Ovary (tissue), 10 donors: ENCODE measurements at regions of chr18 and their contacts with region 1.

Region 1: DNA sequence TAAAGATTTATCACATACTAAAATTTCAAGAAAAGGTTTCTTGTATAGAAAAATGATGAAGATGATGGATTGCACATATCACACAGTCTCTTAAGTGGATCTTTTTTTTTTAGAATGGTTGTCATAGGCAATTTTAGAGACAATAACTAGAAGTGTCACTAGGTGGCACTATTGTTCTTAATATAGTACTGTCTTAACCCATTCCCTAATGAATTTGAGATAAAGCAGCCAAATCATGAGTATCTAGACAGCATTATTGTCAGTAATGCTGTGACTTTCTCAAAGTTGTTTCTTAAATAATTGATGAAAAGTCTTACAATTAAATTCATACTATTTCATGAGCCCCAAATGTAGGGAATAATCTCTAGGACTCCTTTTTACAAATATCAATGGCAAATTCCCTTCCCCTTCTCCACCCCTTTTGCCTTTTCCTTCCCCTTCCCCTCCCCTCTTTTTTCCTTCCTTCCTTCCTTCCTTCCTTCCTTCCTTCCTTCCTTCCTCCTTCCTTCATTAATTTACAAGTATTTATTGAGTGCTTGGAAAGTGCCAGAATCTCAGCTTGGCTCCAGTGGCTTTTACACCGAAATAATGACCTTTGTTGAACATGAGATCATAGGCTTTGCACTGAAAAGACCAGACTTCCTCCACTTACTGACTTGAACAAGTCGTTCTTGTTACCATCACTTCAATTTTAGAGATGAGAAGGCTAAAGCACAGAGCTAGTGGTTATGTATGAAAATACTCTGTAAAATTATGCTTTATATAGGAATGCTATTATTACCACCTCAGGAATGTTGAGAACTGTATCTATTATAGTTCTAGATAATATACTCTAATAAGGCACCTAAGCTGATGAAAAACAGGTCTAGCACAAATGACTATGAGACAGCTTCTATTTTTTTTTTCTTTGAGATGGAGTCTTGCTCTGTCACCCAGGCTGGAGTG is 19.8 kb downstream of the MYL12B start:
- DNase-seq: no peak
- H3K4me3 ChIP-seq: no peak overlapping the region
- H3K27ac ChIP-seq: no peak overlapping the region
- H3K4me1 ChIP-seq: no peaks in the 10 kb centered on the region
- H3K27me3 ChIP-seq: no peaks in the 10 kb centered on the region
- CTCF ChIP-seq: peak; percentile 19 to 75 (median 57)
- EP300 ChIP-seq: no peak
- POLR2A ChIP-seq: no peak

Region 2: DNA sequence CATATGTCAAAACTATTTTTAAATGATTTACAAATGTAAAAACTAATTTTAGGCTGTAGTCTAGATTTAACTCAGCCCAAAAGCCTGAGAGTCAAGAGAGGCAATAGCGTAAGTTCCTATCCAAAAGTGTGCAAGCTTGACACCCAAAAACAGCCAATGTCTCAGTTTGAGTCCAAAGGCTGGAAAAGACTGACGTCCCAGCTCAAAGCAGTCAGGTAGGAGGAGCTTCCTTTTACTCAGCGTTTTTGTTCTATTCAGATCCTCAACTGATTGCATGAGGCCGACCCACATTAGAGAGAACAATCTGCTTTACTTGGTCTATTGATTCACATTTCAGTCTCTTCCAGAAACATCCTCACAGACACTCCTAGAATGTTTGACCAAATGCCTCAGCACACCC is 32.0 kb after region 1 on chr18:
- intact Hi-C with region 1: no loop called
- DNase-seq: no peak
- H3K4me3 ChIP-seq: no peak overlapping the region
- H3K27ac ChIP-seq: no peak overlapping the region
- H3K4me1 ChIP-seq: no peaks in the 10 kb centered on the region
- H3K27me3 ChIP-seq: no peaks in the 10 kb centered on the region
- CTCF ChIP-seq: no peak
- EP300 ChIP-seq: no peak
- POLR2A ChIP-seq: no peak

Region 3: GRCh38 chr18:3340015-3340681 is 58.4 kb after region 1 on chr18:
- intact Hi-C with region 1: no loop called
- DNase-seq: no peak
- H3K4me3 ChIP-seq: no peak overlapping the region
- H3K27ac ChIP-seq: no peak overlapping the region
- H3K4me1 ChIP-seq: no peaks in the 10 kb centered on the region
- H3K27me3 ChIP-seq: no peaks in the 10 kb centered on the region
- CTCF ChIP-seq: no peak
- EP300 ChIP-seq: no peak
- POLR2A ChIP-seq: no peak

Region 4: GRCh38 chr18:3447895-3448837 is 166.4 kb after region 1 on chr18:
- intact Hi-C with region 1: loop called in 3 of 4 experiments (anchors 5 to 10 kb)
- DNase-seq: peak; percentile 92 to 94 (median 93)
- H3K4me3 ChIP-seq: peak overlapping the region; percentile 66
- H3K27ac ChIP-seq: peak overlapping the region; percentile 72 to 97
- H3K4me1 ChIP-seq: peaks cover 5% of the 10 kb centered on the region
- H3K27me3 ChIP-seq: no peaks in the 10 kb centered on the region
- CTCF ChIP-seq: peak in 1 of 3 donors; percentile 27
- EP300 ChIP-seq: no peak
- POLR2A ChIP-seq: peak; percentile 77

Region 5: DNA sequence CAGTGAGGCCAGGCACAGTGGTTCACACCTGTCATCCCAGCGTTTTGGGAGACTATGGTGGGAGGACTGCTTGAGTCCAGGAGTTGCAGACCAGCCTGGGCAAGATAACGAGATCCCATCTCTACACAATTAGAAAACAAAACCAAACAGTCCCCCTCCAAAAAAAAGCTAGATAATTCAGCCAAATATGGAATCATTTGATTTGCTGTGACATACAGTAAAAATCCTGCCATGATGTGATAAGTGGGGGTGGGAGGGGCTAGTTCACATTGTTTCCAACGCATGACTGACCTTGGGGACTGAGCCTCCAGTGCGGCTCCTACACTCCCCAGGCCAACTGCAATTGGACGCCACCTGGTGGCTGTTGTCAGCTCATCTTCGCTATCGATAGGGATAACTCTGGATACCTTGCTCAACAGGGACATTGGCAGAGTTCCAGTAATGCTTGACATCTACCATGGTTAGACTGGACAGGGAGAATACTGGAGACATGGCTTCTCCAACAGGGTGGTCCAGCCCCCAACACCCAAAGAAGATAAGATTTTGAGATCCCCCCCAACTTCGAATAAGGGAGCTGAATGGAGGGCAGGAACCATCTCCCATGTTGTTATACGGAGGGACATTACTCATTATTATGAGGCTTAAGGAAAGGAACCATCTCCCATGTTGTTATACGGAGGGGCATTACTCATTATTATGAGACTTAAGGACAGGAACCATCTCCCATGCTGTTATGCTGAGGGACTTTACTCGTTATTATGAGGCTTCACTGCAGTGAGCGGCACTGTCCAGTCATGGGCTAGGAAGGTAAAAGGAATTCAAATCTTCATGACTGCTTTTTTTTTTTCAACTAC is 304.2 kb after region 1 on chr18:
- intact Hi-C with region 1: loop called in 1 of 4 experiments (anchors 5 kb)
- DNase-seq: peak; percentile 54 to 71 (median 64)
- H3K4me3 ChIP-seq: no peak overlapping the region
- H3K27ac ChIP-seq: no peak overlapping the region
- H3K4me1 ChIP-seq: no peaks in the 10 kb centered on the region
- H3K27me3 ChIP-seq: no peaks in the 10 kb centered on the region
- CTCF ChIP-seq: peak in 2 of 3 donors; percentile 22 to 60
- EP300 ChIP-seq: no peak
- POLR2A ChIP-seq: no peak

Region 6: DNA sequence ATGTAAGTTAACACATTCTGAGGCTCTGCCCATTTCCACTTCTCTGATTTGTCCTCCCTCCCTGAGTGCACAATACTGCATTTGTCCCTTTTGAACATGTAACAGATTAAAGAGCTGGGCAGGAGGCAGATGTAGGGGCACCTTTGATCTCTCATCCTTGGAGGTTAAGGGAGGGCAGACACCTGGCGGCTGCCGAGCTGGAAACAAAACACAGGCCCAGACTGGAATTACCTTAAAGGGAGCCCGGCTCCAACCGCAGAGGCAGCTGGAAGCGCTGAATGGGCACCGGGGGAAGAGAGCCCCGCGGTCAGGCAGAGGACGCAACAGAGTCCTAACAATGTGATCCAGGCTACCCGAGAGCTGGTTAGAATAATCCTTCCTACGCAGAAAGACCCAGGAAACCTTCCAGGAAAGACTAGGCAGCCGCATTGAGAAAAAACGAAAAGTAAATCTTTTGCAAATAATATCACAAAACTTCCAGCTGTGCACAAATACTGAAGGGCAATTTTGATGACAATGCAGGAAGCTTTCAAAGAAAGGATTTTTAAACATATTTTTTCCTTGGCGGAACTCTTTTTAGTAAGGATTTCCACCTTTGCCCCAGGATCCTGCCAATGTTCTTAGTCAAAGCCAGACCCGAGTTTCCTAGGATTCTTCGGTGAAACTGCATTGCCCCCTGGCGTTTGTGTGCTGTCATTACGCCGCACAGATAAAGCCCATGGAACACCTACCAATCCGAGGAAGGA is 384.2 kb after region 1 on chr18:
- intact Hi-C with region 1: loop called (anchors 5 kb)
- DNase-seq: peak; percentile 71 to 89 (median 87)
- H3K4me3 ChIP-seq: no peak overlapping the region
- H3K27ac ChIP-seq: peak overlapping the region in 1 of 2 donors; percentile 75
- H3K4me1 ChIP-seq: no peaks in the 10 kb centered on the region
- H3K27me3 ChIP-seq: no peaks in the 10 kb centered on the region
- CTCF ChIP-seq: peak; percentile 85 to 95 (median 95)
- EP300 ChIP-seq: no peak
- POLR2A ChIP-seq: no peak

Region 7: DNA sequence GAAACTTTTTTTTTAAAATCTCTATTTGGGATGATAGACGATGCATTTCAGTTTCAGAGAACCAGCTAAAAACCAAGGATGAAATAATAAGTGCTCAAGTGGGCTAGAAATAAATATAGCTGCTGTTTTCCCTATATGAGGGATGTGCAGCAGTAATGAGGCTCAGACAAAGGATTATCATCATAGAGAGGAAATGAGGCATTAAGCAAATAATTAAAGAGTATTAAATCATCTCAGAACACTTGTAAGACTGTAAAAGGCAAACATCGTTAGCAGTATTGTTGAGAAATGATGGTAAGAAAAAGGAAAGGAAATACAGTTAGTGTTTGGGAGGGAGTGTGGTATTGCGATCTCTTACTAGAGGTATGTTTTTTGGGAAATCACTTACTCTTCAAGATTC is 401.8 kb after region 1 on chr18:
- intact Hi-C with region 1: loop called in 1 of 4 experiments (anchors 5 kb)
- DNase-seq: no peak
- H3K4me3 ChIP-seq: no peak overlapping the region
- H3K27ac ChIP-seq: no peak overlapping the region
- H3K4me1 ChIP-seq: no peaks in the 10 kb centered on the region
- H3K27me3 ChIP-seq: no peaks in the 10 kb centered on the region
- CTCF ChIP-seq: no peak
- EP300 ChIP-seq: no peak
- POLR2A ChIP-seq: no peak

Region 8: GRCh38 chr18:3703732-3704176 is 422.0 kb after region 1 on chr18:
- intact Hi-C with region 1: no loop called
- DNase-seq: peak; percentile 33 to 66 (median 60)
- H3K4me3 ChIP-seq: no peak overlapping the region
- H3K27ac ChIP-seq: no peak overlapping the region
- H3K4me1 ChIP-seq: peaks cover 1% of the 10 kb centered on the region
- H3K27me3 ChIP-seq: no peaks in the 10 kb centered on the region
- CTCF ChIP-seq: peak in 2 of 3 donors; percentile 14 to 39
- EP300 ChIP-seq: no peak
- POLR2A ChIP-seq: no peak

Region 9: GRCh38 chr18:4004183-4004829 is 722.6 kb after region 1 on chr18:
- intact Hi-C with region 1: loop called in 1 of 4 experiments (anchors 10 kb)
- DNase-seq: no peak
- H3K4me3 ChIP-seq: no peak overlapping the region
- H3K27ac ChIP-seq: no peak overlapping the region
- H3K4me1 ChIP-seq: no peaks in the 10 kb centered on the region
- H3K27me3 ChIP-seq: no peaks in the 10 kb centered on the region
- CTCF ChIP-seq: no peak
- EP300 ChIP-seq: no peak
- POLR2A ChIP-seq: no peak